ENCODE measurements at regions of chr7 and their contacts with region 1.

Region 1: DNA sequence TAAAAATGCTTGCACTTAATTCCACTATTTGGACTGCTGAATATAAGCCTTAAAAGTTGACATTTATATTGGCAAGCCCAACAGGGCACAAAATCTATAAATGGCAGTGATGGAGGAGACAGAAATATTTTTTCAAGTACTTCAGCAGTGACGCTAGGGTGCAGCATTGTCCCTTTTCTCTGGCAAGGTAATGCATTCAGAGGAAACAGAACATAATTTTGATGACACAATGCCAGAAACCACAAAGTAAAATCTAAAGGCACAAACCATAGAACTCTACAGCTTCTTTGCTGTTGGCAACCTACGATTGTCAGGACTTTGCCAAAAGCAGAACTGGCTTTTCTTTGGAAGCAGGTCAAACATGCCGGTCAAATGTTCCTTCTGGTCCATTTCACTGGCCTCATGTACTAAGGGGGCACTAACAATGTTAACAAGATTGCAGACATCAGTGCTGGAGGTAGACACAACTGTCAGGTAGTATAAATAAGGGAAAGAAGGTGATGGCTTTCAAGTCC is 30.9 kb upstream of the FAM133B start:
- DNase-seq: peak; percentile 88
- ATAC-seq: peak; percentile 91
- H3K4me3 ChIP-seq: no peak overlapping the region
- H3K27ac ChIP-seq: peak overlapping the region; percentile 36
- H3K4me1 ChIP-seq: peaks cover 25% of the 10 kb centered on the region
- H3K27me3 ChIP-seq: no peaks in the 10 kb centered on the region
- CTCF ChIP-seq: peak; percentile 87

Region 2: DNA sequence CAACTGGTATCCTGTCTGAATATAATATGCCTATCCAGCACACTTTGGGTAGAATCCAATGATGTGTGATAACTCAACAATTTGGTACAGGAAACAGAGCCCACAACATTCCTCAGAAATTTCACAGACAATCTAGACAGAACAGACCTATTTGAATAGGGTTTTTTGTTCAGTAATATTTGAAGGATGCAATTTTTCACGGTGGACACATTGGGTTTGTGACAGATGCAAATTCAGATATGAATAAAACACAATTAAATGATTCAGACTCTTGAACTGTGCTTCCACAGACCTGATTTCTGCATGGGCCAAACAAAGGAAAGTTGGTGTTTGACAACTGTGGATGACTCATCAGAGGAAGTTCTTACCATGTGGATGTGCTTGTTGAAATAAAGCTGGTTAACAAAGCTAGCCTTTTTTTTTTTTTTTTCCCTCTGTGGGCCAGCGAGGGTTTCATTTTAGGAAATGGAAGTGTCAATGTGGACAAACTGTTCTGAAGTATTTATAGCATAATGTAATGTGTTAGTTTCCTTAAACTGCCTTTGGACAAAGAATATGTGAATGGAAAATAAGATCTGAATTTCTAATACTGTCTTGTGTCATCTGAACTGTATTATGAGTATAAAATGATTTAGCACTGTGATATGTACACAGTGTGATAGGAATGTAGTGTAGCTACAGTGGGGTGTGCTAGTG is 12.3 kb after region 1 on chr7:
- CTCF ChIA-PET with region 1: interaction called, 3 read pairs
- POLR2A ChIA-PET with region 1: no interaction called
- intact Hi-C with region 1: loop called (anchors 1 kb)
- DNase-seq: peak; percentile 91
- ATAC-seq: peak; percentile 80
- H3K4me3 ChIP-seq: peak overlapping the region; percentile 38; the same call in 1 of the 2 replicates
- H3K27ac ChIP-seq: peak overlapping the region; percentile 73
- H3K4me1 ChIP-seq: peaks cover 51% of the 10 kb centered on the region
- H3K27me3 ChIP-seq: no peaks in the 10 kb centered on the region
- CTCF ChIP-seq: no peak

Region 3: GRCh38 chr7:92682903-92683539 is 61.9 kb after region 1 on chr7:
- CTCF ChIA-PET with region 1: no interaction called
- POLR2A ChIA-PET with region 1: no interaction called
- intact Hi-C with region 1: loop called (anchors 5 kb)
- DNase-seq: peak; percentile 33
- ATAC-seq: peak; percentile 73
- H3K4me3 ChIP-seq: no peak overlapping the region
- H3K27ac ChIP-seq: no peak overlapping the region
- H3K4me1 ChIP-seq: peaks cover 6% of the 10 kb centered on the region
- H3K27me3 ChIP-seq: no peaks in the 10 kb centered on the region
- CTCF ChIP-seq: no peak

Region 4: GRCh38 chr7:92691578-92691977 is 70.5 kb after region 1 on chr7:
- CTCF ChIA-PET with region 1: no interaction called
- POLR2A ChIA-PET with region 1: no interaction called
- intact Hi-C with region 1: loop called (anchors 1 kb)
- DNase-seq: peak; percentile 81
- ATAC-seq: peak; percentile 77
- H3K4me3 ChIP-seq: no peak overlapping the region
- H3K27ac ChIP-seq: no peak overlapping the region
- H3K4me1 ChIP-seq: peaks cover 14% of the 10 kb centered on the region
- H3K27me3 ChIP-seq: no peaks in the 10 kb centered on the region
- CTCF ChIP-seq: peak; percentile 81

Region 5: DNA sequence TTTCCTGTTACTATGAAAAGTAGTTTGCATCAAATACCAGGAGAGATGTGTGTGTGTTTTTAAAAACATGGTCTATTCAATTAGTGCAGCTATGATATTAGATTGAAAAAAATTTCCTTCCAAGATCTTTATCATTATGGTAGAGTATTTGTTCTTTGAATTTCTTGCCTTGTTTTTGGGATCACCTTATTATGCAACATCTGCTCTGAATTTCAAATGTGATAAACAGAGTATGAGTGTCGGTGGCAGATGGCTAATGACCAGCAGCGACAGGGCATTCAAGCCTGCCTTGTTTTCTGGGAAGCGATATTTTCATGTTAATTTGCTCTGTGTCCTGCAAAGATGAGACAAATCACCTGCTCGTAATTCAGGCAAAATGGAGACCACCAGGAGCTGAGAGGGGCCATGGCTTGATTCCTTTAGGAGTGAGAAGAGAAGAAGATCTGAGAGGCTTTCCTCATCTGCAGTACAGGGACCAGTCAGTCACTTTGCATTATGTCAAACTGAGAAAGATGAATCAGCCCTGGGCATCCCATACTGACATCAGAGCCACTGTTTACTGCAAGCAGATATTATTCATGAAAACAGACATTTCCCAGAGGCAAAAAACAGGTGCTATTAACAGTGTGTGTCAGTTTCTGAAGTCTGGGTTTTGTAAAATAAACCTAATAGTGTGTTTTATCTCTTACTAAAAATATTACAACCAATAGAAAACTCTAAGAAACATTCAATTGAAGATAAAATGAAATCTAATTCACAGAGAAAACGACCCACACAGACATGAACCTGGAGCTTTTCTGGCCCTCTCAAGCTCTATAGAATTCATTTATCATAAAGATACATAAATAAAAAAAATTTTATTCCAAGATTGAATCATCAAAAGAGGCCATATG is 147.7 kb after region 1 on chr7:
- CTCF ChIA-PET with region 1: no interaction called
- POLR2A ChIA-PET with region 1: no interaction called
- intact Hi-C with region 1: loop called (anchors 1 kb)
- DNase-seq: peak; percentile 29
- ATAC-seq: no peak; the same call in 1 of the 2 replicates
- H3K4me3 ChIP-seq: no peak overlapping the region
- H3K27ac ChIP-seq: no peak overlapping the region
- H3K4me1 ChIP-seq: peaks cover 46% of the 10 kb centered on the region
- H3K27me3 ChIP-seq: no peaks in the 10 kb centered on the region
- CTCF ChIP-seq: no peak

Region 6: DNA sequence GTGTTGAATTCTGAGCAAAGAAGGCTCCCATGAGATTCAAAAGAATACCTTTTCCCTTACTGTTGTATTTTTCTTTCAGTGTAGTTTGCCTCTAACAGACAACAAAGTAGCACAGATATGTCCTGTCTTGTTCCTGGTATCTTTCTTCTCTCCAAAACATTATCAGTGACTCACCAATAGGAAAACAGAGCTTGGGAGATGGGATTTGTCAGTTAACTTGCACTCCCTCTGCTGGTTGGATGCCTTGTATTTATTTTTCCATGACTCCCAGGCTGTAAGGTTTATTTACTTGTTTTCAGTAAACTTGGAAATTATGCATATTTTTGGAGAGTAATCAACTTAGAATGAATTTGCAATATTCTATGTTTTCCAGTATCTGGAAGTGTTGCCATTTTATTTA is 367.0 kb after region 1 on chr7:
- CTCF ChIA-PET with region 1: no interaction called
- POLR2A ChIA-PET with region 1: no interaction called
- intact Hi-C with region 1: loop called (anchors 1 kb)
- DNase-seq: peak; percentile 51
- ATAC-seq: peak; percentile 49
- H3K4me3 ChIP-seq: no peak overlapping the region
- H3K27ac ChIP-seq: no peak overlapping the region
- H3K4me1 ChIP-seq: no peaks in the 10 kb centered on the region
- H3K27me3 ChIP-seq: no peaks in the 10 kb centered on the region
- CTCF ChIP-seq: peak; percentile 75

Region 7: GRCh38 chr7:93055543-93056107 is 434.5 kb after region 1 on chr7:
- CTCF ChIA-PET with region 1: no interaction called
- POLR2A ChIA-PET with region 1: no interaction called
- intact Hi-C with region 1: loop called (anchors 1 kb)
- DNase-seq: peak; percentile 63
- ATAC-seq: peak; percentile 45; the same call in 1 of the 2 replicates
- H3K4me3 ChIP-seq: no peak overlapping the region
- H3K27ac ChIP-seq: no peak overlapping the region
- H3K4me1 ChIP-seq: peaks cover 4% of the 10 kb centered on the region; the same call in 1 of the 2 replicates
- H3K27me3 ChIP-seq: no peaks in the 10 kb centered on the region
- CTCF ChIP-seq: peak; percentile 72

Measured in PC-3 (cell line).